ENCODE measurements at regions of chr9 and their contacts with region 1.

Region 1: DNA sequence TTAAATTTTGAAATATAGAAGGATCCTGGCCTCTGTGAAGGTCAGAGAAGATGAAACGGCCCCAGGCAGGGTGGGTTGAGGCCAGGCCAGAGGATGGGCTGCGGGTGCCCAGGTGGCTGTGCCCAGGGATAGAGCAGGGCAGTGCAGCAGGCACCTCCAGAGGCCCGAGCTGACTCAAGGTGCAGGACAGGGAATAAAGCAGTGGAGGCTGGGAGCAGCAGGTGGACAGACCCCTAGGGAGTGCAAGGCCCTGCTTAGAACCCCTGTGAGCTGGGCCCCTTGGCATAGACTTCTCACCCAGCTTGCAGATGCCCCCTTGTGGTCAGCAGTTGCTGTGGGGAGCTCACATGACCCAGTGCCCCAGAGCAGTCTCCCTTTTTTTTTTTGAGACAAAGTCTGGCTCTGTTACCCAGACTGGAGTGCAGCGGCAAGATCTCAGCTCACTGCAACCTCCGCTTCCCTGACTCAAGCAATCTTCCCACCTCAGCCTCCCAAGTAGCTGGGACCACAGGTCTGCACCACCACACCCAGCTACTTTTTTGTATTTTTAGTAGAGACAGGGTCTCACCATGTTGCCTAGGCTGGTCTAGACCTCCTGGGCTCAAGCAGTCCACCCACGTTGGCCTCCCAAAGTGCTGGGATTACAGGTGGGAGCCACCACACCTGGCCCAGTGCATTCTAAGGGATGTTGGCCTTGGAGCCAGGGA is 118.8 kb downstream of the WNK2 start:
- DNase-seq: peak; percentile 78
- ATAC-seq: peak; percentile 85
- H3K4me3 Mint-ChIP-seq: no peak overlapping the region
- H3K27ac Mint-ChIP-seq: no peak overlapping the region
- H3K4me1 Mint-ChIP-seq: no peaks in the 10 kb centered on the region
- H3K27me3 Mint-ChIP-seq: no peaks in the 10 kb centered on the region
- CTCF ChIP-seq: peak; percentile 33

Region 2: GRCh38 chr9:93159601-93160471 is 142.9 kb before region 1 on chr9:
- CTCF ChIA-PET with region 1: interaction called, 13 read pairs
- POLR2A ChIA-PET with region 1: no interaction called
- intact Hi-C with region 1: loop called (anchors 5 kb)
- DNase-seq: peak; percentile 82
- ATAC-seq: peak; percentile 88
- H3K4me3 Mint-ChIP-seq: no peak overlapping the region
- H3K27ac Mint-ChIP-seq: no peak overlapping the region
- H3K4me1 Mint-ChIP-seq: peaks cover 14% of the 10 kb centered on the region
- H3K27me3 Mint-ChIP-seq: no peaks in the 10 kb centered on the region
- CTCF ChIP-seq: peak; percentile 98

Measured in activated CD8-positive, alpha-beta T cell treated with anti-CD3 and anti-CD28 coated beads for 36 hours (primary cell).